ENCODE measurements at regions of chr22 and their contacts with region 1.

Region 1: GRCh38 chr22:38051900-38052862 is 5.0 kb upstream of the PICK1 start:
- DNase-seq: peak; percentile 90
- ATAC-seq: peak; percentile 83
- H3K4me3 Mint-ChIP-seq: no peak overlapping the region
- H3K27ac Mint-ChIP-seq: no peak overlapping the region
- H3K4me1 Mint-ChIP-seq: peaks cover 6% of the 10 kb centered on the region
- H3K27me3 Mint-ChIP-seq: peaks cover 3% of the 10 kb centered on the region
- CTCF ChIP-seq: peak; percentile 88

Region 2: GRCh38 chr22:37982938-37983859 is 69.0 kb before region 1 on chr22:
- CTCF ChIA-PET with region 1: no interaction called
- POLR2A ChIA-PET with region 1: no interaction called
- intact Hi-C with region 1: no loop called
- DNase-seq: no peak
- ATAC-seq: no peak
- H3K4me3 Mint-ChIP-seq: no peak overlapping the region
- H3K27ac Mint-ChIP-seq: no peak overlapping the region
- H3K4me1 Mint-ChIP-seq: no peaks in the 10 kb centered on the region
- H3K27me3 Mint-ChIP-seq: no peaks in the 10 kb centered on the region
- CTCF ChIP-seq: peak; percentile 31

Region 3: GRCh38 chr22:38069372-38070249 is 17.4 kb after region 1 on chr22:
- CTCF ChIA-PET with region 1: interaction called, 25 read pairs
- POLR2A ChIA-PET with region 1: interaction called, 4 read pairs
- intact Hi-C with region 1: no loop called
- DNase-seq: no peak
- ATAC-seq: no peak
- H3K4me3 Mint-ChIP-seq: no peak overlapping the region
- H3K27ac Mint-ChIP-seq: no peak overlapping the region
- H3K4me1 Mint-ChIP-seq: no peaks in the 10 kb centered on the region
- H3K27me3 Mint-ChIP-seq: no peaks in the 10 kb centered on the region
- CTCF ChIP-seq: no peak

Region 4: DNA sequence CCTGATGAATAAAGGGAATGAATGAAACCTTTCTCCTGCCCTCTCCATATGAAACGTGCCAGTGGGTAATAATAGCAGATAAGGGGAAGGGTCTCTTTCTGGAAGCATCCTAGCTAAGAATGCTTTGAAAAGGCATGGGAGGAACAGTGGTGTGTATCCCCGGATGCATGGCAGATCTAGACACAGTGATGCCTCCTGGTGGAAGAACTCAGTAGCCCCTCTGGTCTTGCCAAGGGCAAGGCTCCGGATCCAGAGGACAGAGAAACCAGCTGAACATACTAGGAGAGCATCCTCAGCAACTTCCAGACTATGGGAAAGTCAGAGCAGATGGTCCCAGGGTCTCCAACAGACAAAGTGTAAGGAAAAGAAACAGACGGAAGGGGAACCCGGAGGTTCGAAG is 51.9 kb after region 1 on chr22:
- CTCF ChIA-PET with region 1: interaction called, 11 read pairs
- POLR2A ChIA-PET with region 1: no interaction called
- intact Hi-C with region 1: no loop called
- DNase-seq: no peak
- ATAC-seq: no peak
- H3K4me3 Mint-ChIP-seq: no peak overlapping the region
- H3K27ac Mint-ChIP-seq: no peak overlapping the region
- H3K4me1 Mint-ChIP-seq: peaks cover 6% of the 10 kb centered on the region
- H3K27me3 Mint-ChIP-seq: no peaks in the 10 kb centered on the region
- CTCF ChIP-seq: no peak

Region 5: DNA sequence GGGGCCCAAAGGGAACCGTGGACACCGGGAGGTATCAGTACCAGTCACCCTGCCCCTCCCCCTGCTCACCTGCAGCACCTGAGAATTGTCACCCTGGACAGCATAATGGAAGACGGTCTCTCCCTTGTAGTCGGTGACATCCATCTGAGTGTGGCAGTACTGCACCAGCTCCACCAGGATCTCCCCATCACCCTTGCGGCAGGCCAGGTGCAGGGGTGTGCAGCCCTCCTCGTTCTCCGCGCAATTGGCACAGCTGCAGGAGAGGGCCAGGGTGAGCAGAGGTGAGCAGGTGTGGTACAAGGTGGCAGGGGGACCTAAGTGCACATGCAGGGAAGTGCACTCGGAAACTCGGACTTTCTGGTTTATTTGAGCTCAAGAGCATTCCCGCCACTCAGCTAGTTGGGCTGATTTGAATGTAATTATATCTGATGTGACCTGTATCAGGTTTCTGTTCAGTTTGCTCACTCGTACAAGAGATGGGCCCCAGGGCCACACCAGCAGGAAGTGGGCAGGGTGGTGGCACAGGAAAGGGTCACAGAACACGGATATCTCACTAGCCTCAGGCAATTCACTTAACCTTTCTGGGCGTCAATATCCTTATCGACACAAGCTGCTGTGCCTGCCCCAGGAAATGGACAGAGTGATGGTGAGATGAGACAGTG is 91.0 kb after region 1 on chr22:
- CTCF ChIA-PET with region 1: interaction called, 26 read pairs
- POLR2A ChIA-PET with region 1: no interaction called
- intact Hi-C with region 1: no loop called
- DNase-seq: peak; percentile 53
- ATAC-seq: peak; percentile 77
- H3K4me3 Mint-ChIP-seq: no peak overlapping the region
- H3K27ac Mint-ChIP-seq: peak overlapping the region; percentile 74
- H3K4me1 Mint-ChIP-seq: peaks cover 20% of the 10 kb centered on the region
- H3K27me3 Mint-ChIP-seq: no peaks in the 10 kb centered on the region
- CTCF ChIP-seq: no peak

Region 6: GRCh38 chr22:38230108-38230825 is 178.1 kb after region 1 on chr22:
- CTCF ChIA-PET with region 1: interaction called, 30 read pairs
- POLR2A ChIA-PET with region 1: no interaction called
- intact Hi-C with region 1: no loop called
- DNase-seq: peak; percentile 66
- ATAC-seq: peak; percentile 61
- H3K4me3 Mint-ChIP-seq: no peak overlapping the region
- H3K27ac Mint-ChIP-seq: no peak overlapping the region
- H3K4me1 Mint-ChIP-seq: no peaks in the 10 kb centered on the region
- H3K27me3 Mint-ChIP-seq: no peaks in the 10 kb centered on the region
- CTCF ChIP-seq: peak; percentile 59

Region 7: GRCh38 chr22:38313384-38313955 is 261.3 kb after region 1 on chr22:
- CTCF ChIA-PET with region 1: interaction called, 13 read pairs
- POLR2A ChIA-PET with region 1: no interaction called
- intact Hi-C with region 1: no loop called
- DNase-seq: peak; percentile 59
- ATAC-seq: no peak
- H3K4me3 Mint-ChIP-seq: no peak overlapping the region
- H3K27ac Mint-ChIP-seq: peak overlapping the region; percentile 91
- H3K4me1 Mint-ChIP-seq: peaks cover 61% of the 10 kb centered on the region
- H3K27me3 Mint-ChIP-seq: no peaks in the 10 kb centered on the region
- CTCF ChIP-seq: no peak

Region 8: GRCh38 chr22:38569972-38570778 is 518.0 kb after region 1 on chr22 and contains the start of gene DMC1:
- CTCF ChIA-PET with region 1: interaction called, 16 read pairs
- POLR2A ChIA-PET with region 1: no interaction called
- intact Hi-C with region 1: no loop called
- DNase-seq: peak; percentile 99
- ATAC-seq: peak; percentile 97
- H3K4me3 Mint-ChIP-seq: peak within 1 kb of the TSS; percentile 89
- H3K27ac Mint-ChIP-seq: peak within 1 kb of the TSS; percentile 98
- H3K4me1 Mint-ChIP-seq: peaks cover 13% of the 10 kb centered on the region
- H3K27me3 Mint-ChIP-seq: no peaks in the 10 kb centered on the region
- CTCF ChIP-seq: no peak
- total RNA-seq, gene DMC1: 14.2 to 15.1 TPM

Measured in activated CD8-positive, alpha-beta T cell treated with anti-CD3 and anti-CD28 coated beads for 36 hours (primary cell).